Natural killer cell (primary cell): ENCODE measurements at regions of chr3 and their contacts with region 1.

Region 1: GRCh38 chr3:101573449-101574387 is at the start of gene PCNP:
- DNase-seq: peak; percentile 98 to 99
- ATAC-seq: peak; percentile 79 to 95 (median 84)
- H3K4me3 ChIP-seq: peak within 1 kb of the TSS; percentile 82
- H3K4me3 Mint-ChIP-seq: peak within 1 kb of the TSS; percentile 91
- H3K27ac ChIP-seq: peak within 1 kb of the TSS; percentile 96
- H3K27ac Mint-ChIP-seq: peak within 1 kb of the TSS; percentile 97 to 98
- H3K4me1 ChIP-seq: peaks cover 14% of the 10 kb centered on the region
- H3K4me1 Mint-ChIP-seq: peaks cover 41 to 42% of the 10 kb centered on the region in 2 donors
- H3K27me3 ChIP-seq: no peaks in the 10 kb centered on the region
- H3K27me3 Mint-ChIP-seq: no peaks in the 10 kb centered on the region
- CTCF ChIP-seq: peak; percentile 89
- total RNA-seq, gene PCNP: 119 to 132 (median 124) TPM

Region 2: GRCh38 chr3:100400780-100401673 is 1172.7 kb before region 1 on chr3 and contains the starts of genes LNP1 and TOMM70:
- intact Hi-C with region 1: loop called (anchors 2 kb)
- DNase-seq: peak; percentile 89 to 96
- ATAC-seq: peak; percentile 85 to 96 (median 90)
- H3K4me3 ChIP-seq: peak within 1 kb of the TSS; percentile 81
- H3K4me3 Mint-ChIP-seq: peak within 1 kb of the TSS; percentile 93
- H3K27ac ChIP-seq: peak within 1 kb of the TSS; percentile 67
- H3K27ac Mint-ChIP-seq: peak within 1 kb of the TSS; percentile 95
- H3K4me1 ChIP-seq: peaks cover 18% of the 10 kb centered on the region
- H3K4me1 Mint-ChIP-seq: peaks cover 20 to 35% of the 10 kb centered on the region in 2 donors
- H3K27me3 ChIP-seq: no peaks in the 10 kb centered on the region
- H3K27me3 Mint-ChIP-seq: no peaks in the 10 kb centered on the region
- CTCF ChIP-seq: no peak
- total RNA-seq, gene LNP1: 0.39 to 0.85 (median 0.73) TPM
- total RNA-seq, gene TOMM70: 19.1 to 26.6 (median 24.0) TPM

Region 3: DNA sequence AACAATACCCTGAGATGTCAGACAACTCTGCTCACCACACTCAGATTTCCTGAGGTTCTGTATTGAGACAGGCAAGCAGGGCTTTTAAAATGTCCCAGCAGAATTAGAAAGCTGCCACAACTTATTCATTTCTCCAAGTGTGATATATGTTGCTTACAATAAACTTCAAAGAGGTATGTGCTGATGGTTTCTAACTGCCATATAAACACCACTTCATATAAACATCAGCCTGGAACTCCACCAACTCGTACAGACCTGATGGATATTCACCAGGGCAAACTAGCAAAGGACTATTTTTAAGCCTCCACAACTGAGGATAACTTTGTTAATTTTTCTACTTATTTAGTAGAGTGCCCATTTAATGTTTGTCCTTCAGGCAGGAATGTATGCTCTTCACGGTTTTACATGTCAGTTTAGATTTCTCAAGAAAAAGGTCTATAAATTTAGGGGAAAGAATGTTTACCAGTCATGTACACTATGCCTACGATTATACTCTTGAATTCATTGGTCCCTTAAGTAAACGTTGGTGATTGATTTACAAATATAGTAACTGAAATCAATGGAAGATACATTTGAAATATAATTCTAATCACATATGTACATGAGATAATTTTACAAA is 470.9 kb before region 1 on chr3:
- intact Hi-C with region 1: no loop called
- DNase-seq: no peak
- ATAC-seq: no peak
- H3K4me3 ChIP-seq: no peak overlapping the region
- H3K4me3 Mint-ChIP-seq: no peak overlapping the region
- H3K27ac ChIP-seq: no peak overlapping the region
- H3K27ac Mint-ChIP-seq: no peak overlapping the region
- H3K4me1 ChIP-seq: no peaks in the 10 kb centered on the region
- H3K4me1 Mint-ChIP-seq: no peaks in the 10 kb centered on the region
- H3K27me3 ChIP-seq: no peaks in the 10 kb centered on the region
- H3K27me3 Mint-ChIP-seq: no peaks in the 10 kb centered on the region
- CTCF ChIP-seq: no peak

Region 4: GRCh38 chr3:101381809-101382208 is 191.9 kb before region 1 on chr3:
- intact Hi-C with region 1: loop called (anchors 5 kb)
- DNase-seq: peak in 1 of 2 donors; percentile 59
- ATAC-seq: peak; percentile 45 to 59 (median 50)
- H3K4me3 ChIP-seq: no peak overlapping the region
- H3K4me3 Mint-ChIP-seq: no peak overlapping the region
- H3K27ac ChIP-seq: no peak overlapping the region
- H3K27ac Mint-ChIP-seq: peak overlapping the region; percentile 24 to 63
- H3K4me1 ChIP-seq: peaks cover 4% of the 10 kb centered on the region
- H3K4me1 Mint-ChIP-seq: peaks cover 30 to 48% of the 10 kb centered on the region in 2 donors
- H3K27me3 ChIP-seq: no peaks in the 10 kb centered on the region
- H3K27me3 Mint-ChIP-seq: no peaks in the 10 kb centered on the region
- CTCF ChIP-seq: peak; percentile 45

Region 5: GRCh38 chr3:101433653-101434052 is 140.1 kb before region 1 on chr3:
- intact Hi-C with region 1: no loop called
- DNase-seq: no peak
- ATAC-seq: no peak
- H3K4me3 ChIP-seq: no peak overlapping the region
- H3K4me3 Mint-ChIP-seq: no peak overlapping the region
- H3K27ac ChIP-seq: no peak overlapping the region
- H3K27ac Mint-ChIP-seq: no peak overlapping the region
- H3K4me1 ChIP-seq: no peaks in the 10 kb centered on the region
- H3K4me1 Mint-ChIP-seq: peaks cover 51 to 56% of the 10 kb centered on the region in 2 donors
- H3K27me3 ChIP-seq: no peaks in the 10 kb centered on the region
- H3K27me3 Mint-ChIP-seq: no peaks in the 10 kb centered on the region
- CTCF ChIP-seq: no peak

Region 6: DNA sequence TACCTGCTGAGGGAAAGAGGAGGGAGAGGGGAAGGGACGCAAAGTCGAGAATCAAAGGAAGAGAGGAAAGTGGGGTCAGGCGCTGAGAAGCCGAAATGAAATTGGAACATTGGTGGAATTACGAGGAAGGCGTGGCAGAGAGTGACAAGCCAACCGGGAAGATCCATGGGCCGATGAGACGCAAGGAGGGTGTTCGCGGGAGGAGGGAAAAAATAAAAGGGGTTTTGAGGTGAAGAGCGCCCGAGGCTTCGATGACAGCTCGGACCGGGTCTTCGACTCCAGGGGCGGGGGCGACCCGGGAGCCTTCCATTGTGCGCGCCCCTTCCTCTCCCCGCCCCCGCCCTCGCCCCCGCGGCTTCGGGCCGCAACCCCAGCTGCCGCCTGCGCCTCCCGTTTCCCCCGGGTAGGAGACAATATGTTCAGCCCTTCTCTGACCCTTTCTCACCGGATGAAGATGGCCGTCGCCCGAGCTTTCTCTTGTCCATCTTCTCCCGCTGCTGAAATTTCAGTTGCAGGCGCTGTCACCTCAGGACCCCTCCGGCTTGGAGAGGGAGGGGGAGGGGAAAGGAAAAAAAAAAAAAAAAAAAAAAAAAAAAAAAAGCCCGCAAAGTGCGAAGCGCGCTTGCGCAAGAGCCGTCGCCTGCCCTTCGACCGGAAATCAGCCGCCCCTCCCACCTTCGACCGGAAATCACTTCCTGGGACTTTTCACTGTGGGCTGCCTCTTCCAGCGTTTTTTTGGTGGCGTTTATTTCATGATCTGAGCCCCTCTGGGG is 60.9 kb before region 1 on chr3 and contains the start of gene SENP7:
- intact Hi-C with region 1: no loop called
- DNase-seq: peak; percentile 65 to 91
- ATAC-seq: peak; percentile 59 to 74 (median 73)
- H3K4me3 ChIP-seq: peak within 1 kb of the TSS; percentile 89
- H3K4me3 Mint-ChIP-seq: peak within 1 kb of the TSS; percentile 98
- H3K27ac ChIP-seq: peak within 1 kb of the TSS; percentile 90
- H3K27ac Mint-ChIP-seq: peak within 1 kb of the TSS; percentile 96 to 99
- H3K4me1 ChIP-seq: peaks cover 11% of the 10 kb centered on the region
- H3K4me1 Mint-ChIP-seq: peaks cover 36 to 44% of the 10 kb centered on the region in 2 donors
- H3K27me3 ChIP-seq: no peaks in the 10 kb centered on the region
- H3K27me3 Mint-ChIP-seq: peaks cover 0 to 5% of the 10 kb centered on the region in 2 donors
- CTCF ChIP-seq: no peak
- total RNA-seq, gene SENP7: 41.4 to 60.6 (median 52.7) TPM

Region 7: GRCh38 chr3:101643861-101644613 is 70.3 kb after region 1 on chr3:
- intact Hi-C with region 1: loop called (anchors 2 kb)
- DNase-seq: peak; percentile 35 to 68
- ATAC-seq: peak; percentile 88 to 91 (median 90)
- H3K4me3 ChIP-seq: no peak overlapping the region
- H3K4me3 Mint-ChIP-seq: peak overlapping the region; percentile 65
- H3K27ac ChIP-seq: peak overlapping the region; percentile 79
- H3K27ac Mint-ChIP-seq: peak overlapping the region; percentile 90 to 91
- H3K4me1 ChIP-seq: peaks cover 26% of the 10 kb centered on the region
- H3K4me1 Mint-ChIP-seq: peaks cover 20 to 24% of the 10 kb centered on the region in 2 donors
- H3K27me3 ChIP-seq: no peaks in the 10 kb centered on the region
- H3K27me3 Mint-ChIP-seq: no peaks in the 10 kb centered on the region
- CTCF ChIP-seq: no peak

Region 8: DNA sequence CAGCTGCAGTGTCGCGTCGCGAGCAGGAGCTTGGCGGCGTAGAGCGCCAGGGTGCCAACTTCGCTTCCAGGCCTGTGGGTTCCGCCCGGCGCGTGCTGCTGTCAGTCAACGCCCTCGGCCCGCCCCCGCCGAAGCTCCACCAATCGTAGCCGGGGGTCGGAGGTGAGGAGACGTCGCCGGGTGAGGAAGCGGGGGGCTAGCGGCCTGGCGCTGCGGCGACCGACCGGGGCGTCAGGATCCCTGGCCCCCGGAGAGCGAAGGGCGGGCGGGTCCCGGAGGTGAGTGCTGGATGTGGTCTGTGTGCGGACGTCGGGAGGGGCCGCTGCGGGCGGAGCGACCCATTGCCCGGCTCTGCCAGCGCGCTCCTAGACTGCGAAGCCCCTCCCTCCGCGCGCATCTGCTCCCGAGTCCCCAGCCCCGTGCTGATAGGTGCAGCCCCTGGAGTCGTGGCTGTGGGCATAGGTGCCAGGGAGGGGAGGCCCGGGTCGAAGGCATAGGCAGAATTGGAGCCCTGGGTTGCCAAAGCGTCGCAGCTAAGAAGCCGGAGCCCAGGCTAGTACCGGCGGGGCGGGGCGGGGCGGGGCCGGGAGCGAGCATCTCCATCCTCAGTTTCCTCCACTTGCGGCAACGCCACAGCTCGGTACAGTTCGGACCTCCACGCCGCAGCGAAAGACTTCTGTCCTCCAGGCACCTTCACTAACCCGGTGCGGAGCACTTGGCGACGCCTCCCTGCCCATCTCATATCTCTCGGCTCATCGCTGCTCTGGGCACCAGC is 205.5 kb after region 1 on chr3 and contains the start of gene NXPE3:
- intact Hi-C with region 1: loop called (anchors 2 kb)
- DNase-seq: peak; percentile 94 to 95
- ATAC-seq: peak; percentile 93 to 97 (median 94)
- H3K4me3 ChIP-seq: peak within 1 kb of the TSS; percentile 82
- H3K4me3 Mint-ChIP-seq: peak within 1 kb of the TSS; percentile 95
- H3K27ac ChIP-seq: peak within 1 kb of the TSS; percentile 95
- H3K27ac Mint-ChIP-seq: peak within 1 kb of the TSS; percentile 91 to 97
- H3K4me1 ChIP-seq: peaks cover 16% of the 10 kb centered on the region
- H3K4me1 Mint-ChIP-seq: peaks cover 24 to 34% of the 10 kb centered on the region in 2 donors
- H3K27me3 ChIP-seq: no peaks in the 10 kb centered on the region
- H3K27me3 Mint-ChIP-seq: no peaks in the 10 kb centered on the region
- CTCF ChIP-seq: no peak
- total RNA-seq, gene NXPE3: 17.0 to 27.1 (median 21.1) TPM